ENCODE measurements at regions of chr10 and their contacts with region 1.

Region 1: GRCh38 chr10:60434418-60435046 is 44.9 kb upstream of the ANK3 start:
- DNase-seq: no peak
- ATAC-seq: peak; percentile 83

Region 2: GRCh38 chr10:59954296-59954695 is 480.2 kb before region 1 on chr10:
- intact Hi-C with region 1: no loop called
- DNase-seq: no peak
- ATAC-seq: no peak

Region 3: GRCh38 chr10:60099998-60100747 is 334.4 kb before region 1 on chr10:
- intact Hi-C with region 1: loop called (anchors 10 kb)
- DNase-seq: no peak
- ATAC-seq: peak; percentile 82

Region 4: GRCh38 chr10:60208676-60209269 is 225.8 kb before region 1 on chr10:
- intact Hi-C with region 1: loop called (anchors 10 kb)
- DNase-seq: no peak
- ATAC-seq: peak; percentile 49

Region 5: DNA sequence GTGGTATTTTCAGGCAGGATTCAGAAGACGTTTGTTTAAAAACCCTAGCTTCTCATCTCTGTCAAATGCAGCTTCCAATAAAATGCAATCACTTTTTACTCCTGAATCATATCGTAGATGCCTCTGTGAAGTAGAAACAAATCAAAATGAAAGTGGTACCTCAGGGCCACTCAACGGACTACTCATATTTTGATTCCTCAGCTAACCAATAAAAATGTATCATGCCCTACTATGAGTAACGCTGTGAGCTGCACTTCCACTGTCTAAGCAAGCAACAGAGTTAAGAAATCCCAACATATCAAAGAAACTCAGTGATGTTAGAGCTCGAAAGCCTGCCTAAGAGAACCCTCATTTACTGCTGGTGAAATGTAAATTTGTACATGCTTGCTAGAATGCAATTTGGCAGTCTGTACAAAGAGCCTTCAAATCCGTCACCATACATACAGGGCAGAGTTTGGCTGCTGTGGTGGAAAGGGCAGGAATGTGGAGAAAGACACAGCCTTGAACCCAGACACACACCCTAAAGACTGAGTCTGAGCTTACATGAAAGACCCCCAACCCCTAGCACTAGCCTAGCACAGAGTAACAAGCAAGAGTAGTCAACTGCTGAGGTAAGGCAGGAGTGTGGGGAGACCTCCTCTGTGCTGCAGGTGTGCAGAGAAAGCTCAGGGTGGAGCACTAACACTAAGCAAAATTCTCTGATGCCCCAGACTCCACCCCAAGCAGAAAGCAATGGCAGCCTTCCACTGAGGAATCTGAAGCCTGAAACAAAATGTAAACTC is 196.4 kb before region 1 on chr10:
- intact Hi-C with region 1: loop called (anchors 2 kb)
- DNase-seq: no peak
- ATAC-seq: peak; percentile 74

Region 6: DNA sequence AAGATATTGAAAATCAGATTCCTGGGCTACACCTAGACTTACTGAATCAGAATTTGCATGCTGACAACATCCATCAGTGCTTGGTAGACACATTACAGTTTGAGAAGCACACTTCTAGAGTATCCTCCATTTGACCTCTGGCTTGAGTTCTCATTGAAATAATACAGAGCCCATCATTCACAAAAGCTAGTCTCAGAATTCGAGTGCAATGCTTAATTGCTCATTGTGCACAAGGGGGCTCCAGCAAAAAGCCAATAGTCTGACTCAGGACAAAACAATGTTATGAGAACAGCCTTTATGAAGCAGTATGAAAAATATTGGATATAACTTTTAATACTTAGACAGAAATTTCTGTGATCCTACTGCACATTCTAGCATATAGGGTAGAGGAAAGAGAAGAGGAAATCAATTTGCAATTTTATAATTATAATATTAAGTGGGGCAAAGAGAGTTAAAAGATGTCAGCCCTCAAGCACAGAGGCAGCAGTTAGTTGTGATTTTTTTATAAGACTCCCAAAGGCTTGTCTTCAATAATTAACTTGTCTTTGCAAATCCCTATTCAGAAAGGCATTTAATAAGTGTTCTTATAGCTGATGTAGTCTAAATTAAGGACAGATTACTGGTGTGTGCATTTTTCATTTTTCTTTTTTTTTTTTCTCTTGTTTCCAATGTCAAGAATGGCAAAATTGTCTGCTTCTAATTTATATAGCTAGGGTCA is 61.0 kb after region 1 on chr10:
- intact Hi-C with region 1: no loop called
- DNase-seq: no peak
- ATAC-seq: no peak

Measured in Right ventricle myocardium superior (tissue), 1 donor.